ENCODE measurements at regions of chr5 and their contacts with region 1.

Region 1: DNA sequence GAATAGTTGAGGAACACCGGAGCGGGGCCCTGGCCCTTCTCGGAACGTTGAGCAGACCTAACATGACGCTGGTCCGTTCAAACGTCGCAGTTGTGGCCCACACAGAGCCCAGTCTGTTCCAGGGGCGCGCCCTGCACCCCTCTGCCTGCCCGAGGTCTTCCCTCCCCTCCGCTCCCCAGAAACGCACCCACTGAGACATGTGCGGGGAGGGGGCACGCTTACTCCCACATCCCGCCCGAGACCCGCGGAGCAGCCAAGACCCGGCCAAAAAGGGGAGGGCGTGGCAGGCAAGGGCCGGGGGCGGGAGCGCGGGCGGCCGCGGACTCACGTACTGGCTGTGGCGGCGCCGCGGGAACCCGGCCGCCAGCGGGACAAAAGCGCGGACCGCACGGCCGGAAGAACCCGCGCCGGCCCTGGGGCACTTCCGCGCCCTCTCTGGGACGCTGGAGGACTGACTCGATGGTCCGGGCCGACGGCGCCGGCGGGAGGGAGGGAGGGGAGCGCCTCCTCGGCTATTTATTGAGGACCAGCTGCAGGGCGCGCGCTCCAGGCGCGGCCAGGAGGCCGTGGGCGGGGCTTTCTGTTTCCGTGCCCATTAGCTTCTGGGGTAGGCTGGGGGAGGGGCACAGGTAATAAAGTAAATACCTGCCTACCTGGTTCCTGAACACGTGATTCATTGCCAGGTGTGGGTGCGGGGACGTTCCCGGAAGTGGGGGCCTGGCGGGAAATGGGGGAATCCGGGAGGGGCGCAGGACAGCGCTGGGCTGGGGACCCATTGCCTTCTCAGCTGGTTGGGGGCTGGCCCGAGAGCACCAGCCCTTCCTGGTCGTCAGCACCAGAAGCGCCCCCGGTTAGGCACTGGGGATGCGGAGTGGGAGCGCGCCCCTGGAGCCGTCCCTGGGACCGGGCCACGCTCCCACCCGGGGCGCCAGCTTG is at the start of gene ZFP62:
- DNase-seq: peak; percentile 94 to 97
- H3K4me3 ChIP-seq: peak within 1 kb of the TSS; percentile 87
- H3K4me3 Mint-ChIP-seq: peak within 1 kb of the TSS; percentile 92
- H3K27ac Mint-ChIP-seq: peak within 1 kb of the TSS; percentile 87
- H3K4me1 ChIP-seq: peaks cover 10% of the 10 kb centered on the region; the same call in 1 of the 2 replicates
- H3K4me1 Mint-ChIP-seq: peaks cover 27% of the 10 kb centered on the region
- H3K27me3 ChIP-seq: no peaks in the 10 kb centered on the region
- H3K27me3 Mint-ChIP-seq: no peaks in the 10 kb centered on the region
- CTCF ChIP-seq: peak in 1 of 2 experiments; percentile 0
- total RNA-seq, gene ZFP62: 34.4 and 35.9 TPM in 2 replicates

Region 2: DNA sequence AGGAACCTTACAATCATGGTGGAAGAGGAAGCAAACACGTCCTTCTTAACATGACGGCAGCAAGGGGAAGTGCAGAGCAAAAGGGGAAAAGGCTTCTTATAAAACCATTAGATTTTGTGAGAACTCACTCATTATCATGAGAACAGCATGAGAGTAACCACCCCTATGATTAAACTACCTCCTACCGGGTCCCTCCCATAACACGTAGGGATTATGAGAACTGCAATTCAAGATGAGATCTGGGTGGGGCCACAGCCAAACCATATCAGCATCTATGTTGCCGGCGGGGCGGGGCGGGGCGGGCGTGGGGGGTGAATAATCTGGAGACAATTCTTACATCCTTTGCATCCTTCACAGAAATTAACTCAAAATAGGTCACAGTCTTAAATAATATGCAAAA is 449.2 kb before region 1 on chr5:
- CTCF ChIA-PET with region 1: no interaction called
- POLR2A ChIA-PET with region 1: no interaction called
- intact Hi-C with region 1: no loop called
- DNase-seq: no peak
- H3K4me3 ChIP-seq: no peak overlapping the region
- H3K4me3 Mint-ChIP-seq: no peak overlapping the region
- H3K27ac Mint-ChIP-seq: no peak overlapping the region
- H3K4me1 ChIP-seq: no peaks in the 10 kb centered on the region
- H3K4me1 Mint-ChIP-seq: no peaks in the 10 kb centered on the region
- H3K27me3 ChIP-seq: no peaks in the 10 kb centered on the region
- H3K27me3 Mint-ChIP-seq: peaks cover 6% of the 10 kb centered on the region
- CTCF ChIP-seq: no peak

Region 3: GRCh38 chr5:180810210-180810958 is 50.8 kb before region 1 on chr5:
- CTCF ChIA-PET with region 1: interaction called, 6 read pairs
- POLR2A ChIA-PET with region 1: interaction called, 4 read pairs
- intact Hi-C with region 1: loop called (anchors 1 kb)
- DNase-seq: peak; percentile 96 to 97
- H3K4me3 ChIP-seq: peak overlapping the region; percentile 64
- H3K4me3 Mint-ChIP-seq: peak overlapping the region; percentile 84
- H3K27ac Mint-ChIP-seq: peak overlapping the region; percentile 66
- H3K4me1 ChIP-seq: peaks cover 42% of the 10 kb centered on the region
- H3K4me1 Mint-ChIP-seq: peaks cover 62% of the 10 kb centered on the region
- H3K27me3 ChIP-seq: no peaks in the 10 kb centered on the region
- H3K27me3 Mint-ChIP-seq: no peaks in the 10 kb centered on the region
- CTCF ChIP-seq: no peak

Region 4: GRCh38 chr5:180817893-180818674 is 43.1 kb before region 1 on chr5:
- CTCF ChIA-PET with region 1: no interaction called
- POLR2A ChIA-PET with region 1: interaction called, 10 read pairs
- intact Hi-C with region 1: no loop called
- DNase-seq: no peak
- H3K4me3 ChIP-seq: no peak overlapping the region
- H3K4me3 Mint-ChIP-seq: no peak overlapping the region
- H3K27ac Mint-ChIP-seq: no peak overlapping the region
- H3K4me1 ChIP-seq: peaks cover 33% of the 10 kb centered on the region
- H3K4me1 Mint-ChIP-seq: peaks cover 27% of the 10 kb centered on the region
- H3K27me3 ChIP-seq: no peaks in the 10 kb centered on the region
- H3K27me3 Mint-ChIP-seq: no peaks in the 10 kb centered on the region
- CTCF ChIP-seq: no peak

Region 5: GRCh38 chr5:180831139-180832048 is 29.8 kb before region 1 on chr5:
- CTCF ChIA-PET with region 1: interaction called, 3 read pairs
- POLR2A ChIA-PET with region 1: interaction called, 7 read pairs
- intact Hi-C with region 1: loop called (anchors 1 kb)
- DNase-seq: peak; percentile 83 to 89
- H3K4me3 ChIP-seq: peak overlapping the region; percentile 76
- H3K4me3 Mint-ChIP-seq: peak overlapping the region; percentile 97
- H3K27ac Mint-ChIP-seq: peak overlapping the region; percentile 98
- H3K4me1 ChIP-seq: peaks cover 14% of the 10 kb centered on the region
- H3K4me1 Mint-ChIP-seq: peaks cover 17% of the 10 kb centered on the region
- H3K27me3 ChIP-seq: no peaks in the 10 kb centered on the region
- H3K27me3 Mint-ChIP-seq: no peaks in the 10 kb centered on the region
- CTCF ChIP-seq: peak in 1 of 2 experiments; percentile 8

Region 6: GRCh38 chr5:181001947-181002346 is 140.8 kb after region 1 on chr5:
- CTCF ChIA-PET with region 1: no interaction called
- POLR2A ChIA-PET with region 1: no interaction called
- intact Hi-C with region 1: loop called (anchors 5 kb)
- DNase-seq: peak in 1 of 2 experiments; percentile 54
- H3K4me3 ChIP-seq: no peak overlapping the region
- H3K4me3 Mint-ChIP-seq: no peak overlapping the region
- H3K27ac Mint-ChIP-seq: no peak overlapping the region
- H3K4me1 ChIP-seq: no peaks in the 10 kb centered on the region
- H3K4me1 Mint-ChIP-seq: no peaks in the 10 kb centered on the region
- H3K27me3 ChIP-seq: no peaks in the 10 kb centered on the region
- H3K27me3 Mint-ChIP-seq: peaks cover under 1% of the 10 kb centered on the region
- CTCF ChIP-seq: no peak

Region 7: DNA sequence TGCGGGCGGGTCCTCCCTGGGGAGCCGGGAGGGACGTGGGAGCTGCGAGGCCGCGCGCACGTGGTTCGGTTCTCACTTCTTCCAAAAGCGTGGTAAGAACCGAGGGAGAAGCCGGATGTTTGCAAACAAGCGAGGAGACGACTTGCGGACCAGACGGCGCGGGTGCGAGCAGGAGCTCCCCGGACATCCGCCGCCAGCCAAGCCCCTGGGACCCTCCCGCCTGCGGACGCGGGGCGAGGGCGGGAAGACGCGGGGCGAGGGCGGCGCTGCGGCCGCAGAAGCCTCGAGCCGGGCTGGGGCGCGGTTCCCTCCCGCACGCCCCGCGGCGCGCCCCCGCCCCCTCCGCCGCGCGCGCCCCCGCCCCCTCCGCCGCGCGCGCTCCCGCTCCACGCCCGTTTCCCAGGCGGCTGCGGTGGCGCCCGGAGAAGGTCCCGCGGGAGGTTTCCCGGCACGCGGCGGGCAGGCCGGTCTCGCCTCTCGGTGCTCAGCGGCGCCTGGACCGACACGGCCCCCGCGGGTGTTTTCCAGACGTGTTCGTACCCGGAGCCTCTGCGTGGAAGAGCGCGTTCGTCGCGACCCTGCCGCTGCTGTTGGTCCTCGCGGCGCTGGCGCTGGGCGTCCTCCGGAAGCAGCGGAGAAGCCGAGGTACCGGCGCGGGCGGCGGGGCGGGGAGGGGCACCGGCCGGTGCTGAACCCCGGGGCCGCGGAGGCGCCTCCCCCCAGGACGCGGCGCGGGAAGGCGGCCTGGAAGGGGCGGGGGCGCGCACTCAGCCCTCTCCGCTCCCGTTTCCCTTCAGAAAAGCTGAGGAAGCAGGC is 191.7 kb after region 1 on chr5:
- CTCF ChIA-PET with region 1: no interaction called
- POLR2A ChIA-PET with region 1: interaction called, 4 read pairs
- intact Hi-C with region 1: loop called (anchors 5 kb)
- DNase-seq: peak; percentile 52 to 58
- H3K4me3 ChIP-seq: peak overlapping the region; percentile 83
- H3K4me3 Mint-ChIP-seq: peak overlapping the region; percentile 90
- H3K27ac Mint-ChIP-seq: no peak overlapping the region
- H3K4me1 ChIP-seq: peaks cover 7% of the 10 kb centered on the region; the same call in 1 of the 2 replicates
- H3K4me1 Mint-ChIP-seq: peaks cover 8% of the 10 kb centered on the region
- H3K27me3 ChIP-seq: no peaks in the 10 kb centered on the region
- H3K27me3 Mint-ChIP-seq: peaks cover 13% of the 10 kb centered on the region
- CTCF ChIP-seq: no peak

Region 8: DNA sequence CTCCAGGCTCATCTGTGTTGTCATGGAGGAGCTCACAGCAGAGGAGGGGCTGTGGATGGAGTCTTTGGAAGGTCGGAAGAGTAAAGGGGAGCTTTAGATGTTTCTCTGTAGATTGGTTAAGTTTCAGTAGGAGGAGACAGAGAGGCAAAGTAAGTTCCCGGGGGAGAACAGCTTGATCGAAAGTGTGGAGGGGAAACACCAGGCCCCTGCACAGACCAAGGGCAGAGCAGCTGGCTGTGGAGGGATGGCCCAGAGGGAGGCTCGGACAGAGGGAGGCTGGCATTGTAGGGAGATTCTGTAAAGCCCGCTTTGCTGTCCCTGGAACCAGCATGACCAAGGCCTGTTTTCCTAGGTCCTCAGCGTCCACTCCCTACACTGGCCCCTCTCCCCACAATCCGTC is 280.9 kb after region 1 on chr5:
- CTCF ChIA-PET with region 1: interaction called, 11 read pairs
- POLR2A ChIA-PET with region 1: no interaction called
- intact Hi-C with region 1: no loop called
- DNase-seq: no peak
- H3K4me3 ChIP-seq: no peak overlapping the region
- H3K4me3 Mint-ChIP-seq: no peak overlapping the region
- H3K27ac Mint-ChIP-seq: no peak overlapping the region
- H3K4me1 ChIP-seq: no peaks in the 10 kb centered on the region
- H3K4me1 Mint-ChIP-seq: no peaks in the 10 kb centered on the region
- H3K27me3 ChIP-seq: no peaks in the 10 kb centered on the region
- H3K27me3 Mint-ChIP-seq: peaks cover 9% of the 10 kb centered on the region
- CTCF ChIP-seq: no peak

Measured in Caco-2 (cell line).